Esophagus muscularis mucosa (tissue), 4 donors: ENCODE measurements at regions of chr7 and their contacts with region 1.

Region 1: GRCh38 chr7:30564243-30564892 is 30.3 kb upstream of the GARS1 start:
- DNase-seq: no peak
- H3K4me3 ChIP-seq: no peak overlapping the region
- H3K27ac ChIP-seq: no peak overlapping the region
- H3K4me1 ChIP-seq: peaks cover 8 to 20% (median 15%) of the 10 kb centered on the region in 4 donors
- H3K27me3 ChIP-seq: no peaks in the 10 kb centered on the region
- CTCF ChIP-seq: peak; percentile 73 to 91 (median 77)
- EP300 ChIP-seq: no peak
- POLR2A ChIP-seq: no peak

Region 2: GRCh38 chr7:30510124-30511075 is 54.0 kb before region 1 on chr7:
- intact Hi-C with region 1: loop called (anchors 5 kb)
- DNase-seq: no peak
- H3K4me3 ChIP-seq: no peak overlapping the region
- H3K27ac ChIP-seq: no peak overlapping the region
- H3K4me1 ChIP-seq: peaks cover 0 to 5% (median 4%) of the 10 kb centered on the region in 4 donors
- H3K27me3 ChIP-seq: no peaks in the 10 kb centered on the region
- CTCF ChIP-seq: peak; percentile 68 to 85 (median 73)
- EP300 ChIP-seq: no peak
- POLR2A ChIP-seq: no peak

Region 3: DNA sequence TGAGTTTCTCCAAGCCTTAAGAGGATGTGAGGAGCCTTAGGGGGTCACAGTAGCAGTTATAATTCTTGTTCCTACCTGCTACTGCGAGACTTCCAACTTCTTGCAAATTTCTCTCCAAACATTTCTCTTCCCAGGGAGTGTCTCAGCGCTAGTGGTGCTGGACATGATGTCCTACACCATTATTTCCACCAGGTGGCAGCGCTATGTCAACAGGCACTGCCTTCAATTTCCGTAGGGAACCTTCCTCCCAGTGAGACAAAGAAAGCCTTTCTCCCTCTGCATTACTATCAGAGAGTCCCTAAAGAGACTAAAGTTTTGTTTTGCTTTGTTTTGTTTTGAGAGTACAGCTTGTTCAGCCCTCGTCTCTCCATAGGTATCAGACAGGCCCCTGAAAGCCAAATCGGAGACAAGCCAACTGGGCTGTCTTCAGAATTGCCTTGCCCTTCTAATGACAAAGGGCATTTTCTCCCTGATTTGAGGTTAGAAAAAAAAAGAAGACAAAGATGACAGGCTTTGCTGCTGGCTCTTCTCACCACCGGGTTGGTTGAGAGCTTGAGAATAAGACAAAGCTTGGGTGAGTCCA is 15.5 kb before region 1 on chr7:
- intact Hi-C with region 1: loop called (anchors 2 kb)
- DNase-seq: no peak
- H3K4me3 ChIP-seq: no peak overlapping the region
- H3K27ac ChIP-seq: peak overlapping the region in 1 of 4 donors; percentile 11
- H3K4me1 ChIP-seq: peaks cover 16 to 23% (median 19%) of the 10 kb centered on the region in 4 donors
- H3K27me3 ChIP-seq: no peaks in the 10 kb centered on the region
- CTCF ChIP-seq: peak; percentile 83 to 88 (median 84)
- EP300 ChIP-seq: no peak
- POLR2A ChIP-seq: no peak